CD8-positive, alpha-beta T cell (primary cell): ENCODE measurements at regions of chr16 and their contacts with region 1.

Region 1: GRCh38 chr16:35881654-35882053 is 2422.2 kb downstream of the TP53TG3F start:
- DNase-seq: no peak
- ATAC-seq: no peak
- H3K4me3 ChIP-seq: no peak overlapping the region
- H3K4me3 Mint-ChIP-seq: no peak overlapping the region
- H3K27ac ChIP-seq: no peak overlapping the region
- H3K27ac Mint-ChIP-seq: no peak overlapping the region
- H3K4me1 ChIP-seq: no peaks in the 10 kb centered on the region
- H3K4me1 Mint-ChIP-seq: no peaks in the 10 kb centered on the region
- H3K27me3 ChIP-seq: no peaks in the 10 kb centered on the region
- H3K27me3 Mint-ChIP-seq: no peaks in the 10 kb centered on the region
- CTCF ChIP-seq: no peak

Region 2: GRCh38 chr16:35605921-35606320 is 275.7 kb before region 1 on chr16:
- CTCF ChIA-PET with region 1: no interaction called
- POLR2A ChIA-PET with region 1: no interaction called
- intact Hi-C with region 1: no loop called
- DNase-seq: no peak
- ATAC-seq: no peak
- H3K4me3 ChIP-seq: no peak overlapping the region
- H3K4me3 Mint-ChIP-seq: no peak overlapping the region
- H3K27ac ChIP-seq: no peak overlapping the region
- H3K27ac Mint-ChIP-seq: no peak overlapping the region
- H3K4me1 ChIP-seq: no peaks in the 10 kb centered on the region
- H3K4me1 Mint-ChIP-seq: no peaks in the 10 kb centered on the region
- H3K27me3 ChIP-seq: no peaks in the 10 kb centered on the region
- H3K27me3 Mint-ChIP-seq: no peaks in the 10 kb centered on the region
- CTCF ChIP-seq: no peak

Region 3: DNA sequence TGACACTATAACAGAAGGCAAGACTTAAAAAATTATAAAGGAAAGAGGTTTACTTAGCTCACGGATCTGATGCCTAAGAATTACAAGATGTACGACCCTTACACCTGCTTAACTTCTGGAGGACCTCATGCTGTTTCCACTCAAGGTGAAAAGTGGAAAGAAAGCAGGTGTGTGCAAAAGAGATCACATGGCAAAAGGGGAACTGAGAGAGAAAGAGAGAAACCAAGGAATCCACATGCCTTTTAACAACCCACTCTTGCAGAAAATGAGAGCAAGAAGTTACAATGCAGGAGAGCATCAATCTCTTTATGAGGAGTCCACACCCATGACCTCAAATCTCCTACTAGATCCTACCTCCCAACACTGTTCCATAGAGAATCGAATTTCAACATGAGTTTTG is 40.0 kb before region 1 on chr16:
- CTCF ChIA-PET with region 1: no interaction called
- POLR2A ChIA-PET with region 1: no interaction called
- intact Hi-C with region 1: loop called in 1 of 2 experiments (anchors 10 kb)
- DNase-seq: no peak
- ATAC-seq: no peak
- H3K4me3 ChIP-seq: no peak overlapping the region
- H3K4me3 Mint-ChIP-seq: no peak overlapping the region
- H3K27ac ChIP-seq: no peak overlapping the region
- H3K27ac Mint-ChIP-seq: no peak overlapping the region
- H3K4me1 ChIP-seq: no peaks in the 10 kb centered on the region
- H3K4me1 Mint-ChIP-seq: no peaks in the 10 kb centered on the region
- H3K27me3 ChIP-seq: no peaks in the 10 kb centered on the region
- H3K27me3 Mint-ChIP-seq: no peaks in the 10 kb centered on the region
- CTCF ChIP-seq: no peak